Activated B cell treated with CpG ODN at 0.5 μM for 24 hours (primary cell): ENCODE measurements at regions of chr14 and their contacts with region 1.

Region 1: DNA sequence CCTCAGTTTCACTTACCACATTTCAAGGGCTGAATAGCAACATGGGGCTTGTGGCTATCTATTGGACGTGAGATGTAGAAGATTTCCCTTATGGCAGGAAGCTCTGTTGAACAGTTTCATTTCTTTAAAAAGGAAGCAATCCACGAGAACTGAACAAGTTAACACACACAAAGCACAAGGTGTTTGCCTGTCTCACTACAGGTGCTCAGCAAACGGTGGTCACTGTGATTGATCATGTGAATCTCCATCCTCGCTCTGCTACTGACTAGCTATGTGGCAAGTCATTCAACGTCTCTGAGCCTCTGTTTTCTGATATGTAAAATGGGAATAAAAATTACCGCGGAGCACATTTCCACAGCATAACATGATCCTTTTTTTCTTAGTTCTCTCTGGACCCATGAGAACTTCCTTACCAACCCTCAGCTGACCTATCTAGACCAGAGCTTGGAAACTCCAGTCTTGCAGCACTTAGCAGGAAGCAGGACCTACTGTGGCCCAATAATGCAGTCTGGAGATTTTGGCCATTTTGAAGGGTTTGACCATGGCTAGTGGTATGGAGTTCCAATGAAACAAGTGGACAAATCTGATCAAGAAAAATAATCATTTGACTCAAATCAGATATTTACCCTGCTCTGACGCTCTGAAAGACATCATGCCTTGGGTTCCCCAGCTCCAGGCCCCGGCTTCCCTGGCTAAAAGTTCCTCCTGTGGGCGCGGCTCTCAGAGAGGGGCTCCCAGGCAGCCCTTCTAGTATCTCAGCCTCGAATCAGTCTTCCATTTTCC is 278.8 kb downstream of the ZFP36L1 start:
- DNase-seq: no peak
- ATAC-seq: peak; percentile 84
- H3K4me3 Mint-ChIP-seq: peak overlapping the region; percentile 64
- H3K27ac Mint-ChIP-seq: peak overlapping the region; percentile 94
- H3K4me1 Mint-ChIP-seq: peaks cover 66% of the 10 kb centered on the region
- H3K27me3 Mint-ChIP-seq: no peaks in the 10 kb centered on the region
- CTCF ChIP-seq: no peak

Region 2: DNA sequence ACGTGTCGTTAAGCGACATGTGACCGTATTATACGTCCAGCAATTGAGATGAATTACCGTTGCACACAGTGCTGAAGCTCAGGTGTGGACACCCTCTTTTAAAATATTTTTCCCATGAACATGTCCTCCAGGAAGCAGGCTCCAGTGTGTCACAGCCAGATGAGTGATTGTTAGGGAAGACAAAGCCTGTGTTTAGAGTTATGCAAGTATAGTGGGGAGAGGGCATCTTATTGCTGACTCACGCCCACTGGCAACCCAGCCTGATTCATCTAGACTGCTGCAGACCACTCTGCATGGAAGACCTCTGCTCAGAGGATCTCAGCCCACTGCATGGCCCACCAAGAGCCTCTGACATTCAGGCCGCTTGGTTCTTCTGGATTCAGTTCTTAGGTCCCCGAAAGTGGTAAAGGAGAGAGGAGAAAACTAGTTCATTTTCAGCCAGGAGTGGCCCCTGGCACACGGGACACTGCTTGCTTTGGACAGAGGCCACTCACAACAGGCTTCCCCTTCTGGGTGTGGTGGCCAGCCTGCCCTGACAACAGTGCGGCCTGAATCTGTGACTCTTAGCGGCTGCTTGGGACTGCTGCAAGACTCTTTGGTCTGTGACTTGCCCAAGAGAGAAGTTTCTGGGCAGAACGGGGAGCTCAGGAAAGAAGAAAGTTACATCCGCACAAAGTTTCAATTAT is 12.5 kb after region 1 on chr14:
- CTCF ChIA-PET with region 1: no interaction called
- POLR2A ChIA-PET with region 1: interaction called, 74 read pairs
- intact Hi-C with region 1: no loop called
- DNase-seq: no peak
- ATAC-seq: no peak
- H3K4me3 Mint-ChIP-seq: no peak overlapping the region
- H3K27ac Mint-ChIP-seq: peak overlapping the region; percentile 61
- H3K4me1 Mint-ChIP-seq: peaks cover 50% of the 10 kb centered on the region
- H3K27me3 Mint-ChIP-seq: no peaks in the 10 kb centered on the region
- CTCF ChIP-seq: no peak

Region 3: GRCh38 chr14:68574906-68575305 is 60.9 kb after region 1 on chr14:
- CTCF ChIA-PET with region 1: no interaction called
- POLR2A ChIA-PET with region 1: no interaction called
- intact Hi-C with region 1: no loop called
- DNase-seq: no peak
- ATAC-seq: no peak
- H3K4me3 Mint-ChIP-seq: no peak overlapping the region
- H3K27ac Mint-ChIP-seq: no peak overlapping the region
- H3K4me1 Mint-ChIP-seq: no peaks in the 10 kb centered on the region
- H3K27me3 Mint-ChIP-seq: no peaks in the 10 kb centered on the region
- CTCF ChIP-seq: no peak